ENCODE measurements at regions of chr7 and their contacts with region 1.

Region 1: GRCh38 chr7:101217388-101218235 is at the starts of genes PLOD3 and ZNHIT1:
- DNase-seq: peak; percentile 98
- H3K4me3 Mint-ChIP-seq: peak within 1 kb of the TSS; percentile 89
- H3K27ac Mint-ChIP-seq: peak within 1 kb of the TSS; percentile 73
- H3K4me1 Mint-ChIP-seq: peaks cover 35% of the 10 kb centered on the region
- H3K27me3 Mint-ChIP-seq: no peaks in the 10 kb centered on the region
- total RNA-seq, gene PLOD3: 18.8 to 19.7 TPM
- total RNA-seq, gene ZNHIT1: 31.7 to 35.3 TPM

Region 2: DNA sequence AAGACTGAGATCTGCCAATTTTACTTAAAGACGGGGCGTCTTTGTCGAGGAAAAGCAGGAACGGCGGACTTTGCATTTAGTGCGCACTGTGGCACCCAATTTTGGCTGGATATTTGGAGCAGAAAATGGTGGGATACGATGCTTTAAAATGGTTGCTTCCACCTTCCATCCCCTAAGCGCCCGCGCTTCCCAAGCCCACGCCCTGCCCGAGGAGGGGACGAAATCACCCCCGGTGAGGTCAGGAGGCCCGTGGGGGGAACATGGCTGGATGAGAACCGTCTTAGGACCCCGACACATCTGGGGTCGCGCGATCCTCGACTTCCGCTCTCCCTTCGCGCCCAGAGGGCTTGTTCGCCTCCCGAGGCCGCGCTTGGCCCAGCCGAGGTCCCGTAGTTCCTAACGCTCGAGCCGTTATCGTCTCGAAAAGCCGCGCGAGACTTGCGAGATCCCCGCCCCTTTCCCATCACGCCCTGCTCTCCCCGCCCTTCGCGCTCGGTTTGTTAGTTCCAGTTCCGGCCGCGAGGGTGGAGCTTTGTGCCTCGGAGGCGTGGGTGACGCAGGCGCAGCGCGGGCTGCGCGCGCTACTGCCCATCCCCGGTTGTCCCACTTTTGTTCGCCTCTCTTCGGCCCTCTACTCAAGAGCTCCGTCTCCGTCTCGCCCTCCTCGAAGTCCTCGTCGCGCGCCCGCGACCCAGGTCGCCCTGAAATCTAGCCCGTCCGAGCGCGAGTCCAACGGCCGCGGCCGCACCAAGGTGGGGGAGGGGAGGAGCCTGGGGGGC is 342.8 kb before region 1 on chr7 and contains the start of gene SRRT:
- CTCF ChIA-PET with region 1: interaction called, 3 read pairs
- intact Hi-C with region 1: loop called (anchors 1 kb)
- DNase-seq: peak; percentile 99
- H3K4me3 Mint-ChIP-seq: peak within 1 kb of the TSS; percentile 97
- H3K27ac Mint-ChIP-seq: peak within 1 kb of the TSS; percentile 98
- H3K4me1 Mint-ChIP-seq: peaks cover 44% of the 10 kb centered on the region
- H3K27me3 Mint-ChIP-seq: no peaks in the 10 kb centered on the region
- total RNA-seq, gene SRRT: 166 to 169 TPM